ENCODE measurements at regions of chr3 and their contacts with region 1.

Region 1: GRCh38 chr3:179322286-179323196 is at the start of gene ZNF639:
- DNase-seq: peak; percentile 80 to 83
- ATAC-seq: peak; percentile 86 to 94
- H3K4me3 ChIP-seq: peak within 1 kb of the TSS; percentile 80
- H3K27ac ChIP-seq: peak within 1 kb of the TSS; percentile 95 to 100
- H3K4me1 ChIP-seq: peaks cover 8% of the 10 kb centered on the region
- CTCF ChIP-seq: peak; percentile 53
- EP300 ChIP-seq: no peak
- POLR2A ChIP-seq: peak; percentile 75
- RAD21 ChIP-seq: no peak
- polyA plus RNA-seq, gene ZNF639: 19.0 and 19.8 TPM in 2 replicates

Region 2: DNA sequence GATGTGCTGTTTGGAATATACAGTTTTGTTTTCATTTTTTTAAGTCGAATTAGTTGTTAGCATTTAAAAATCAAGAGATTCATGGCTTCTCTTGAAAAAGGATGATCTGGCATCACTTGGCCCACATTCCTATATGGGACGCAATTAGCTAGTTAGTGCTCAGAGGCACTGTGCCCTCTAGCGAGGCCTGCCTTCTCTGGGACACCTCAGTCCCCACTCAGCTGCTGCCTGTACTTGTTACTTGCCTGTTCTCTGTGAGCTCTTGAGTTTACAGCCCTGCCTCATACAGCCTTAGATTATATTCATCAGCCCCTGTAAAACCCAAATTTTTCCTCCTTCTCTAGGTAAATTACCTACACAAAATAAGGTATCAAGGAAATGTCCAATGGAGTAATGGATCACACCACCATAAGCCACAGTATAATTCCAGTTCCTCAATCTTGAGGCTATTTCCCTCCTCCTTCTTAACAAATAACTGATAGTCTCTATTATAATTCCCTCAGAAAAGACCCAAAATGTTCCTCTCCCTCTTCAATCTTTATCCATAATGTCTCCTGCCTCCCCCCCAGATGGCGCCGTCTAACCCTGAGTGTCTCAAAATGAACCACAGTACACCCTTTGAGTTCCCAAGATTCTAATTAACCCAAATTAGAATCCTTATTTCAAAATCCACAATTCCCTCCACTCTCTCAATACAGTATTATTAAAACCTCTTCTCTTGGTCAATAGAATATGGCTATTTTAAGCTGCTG is 253.6 kb before region 1 on chr3:
- CTCF ChIA-PET with region 1: interaction called, 11 read pairs
- POLR2A ChIA-PET with region 1: interaction called, 6 read pairs
- DNase-seq: peak; percentile 30 to 35
- ATAC-seq: peak in 1 of 2 experiments; percentile 48; a peak in 1 of 6 replicates
- H3K4me3 ChIP-seq: peak overlapping the region; percentile 88; the same call in 2 of the 3 replicates
- H3K27ac ChIP-seq: peak overlapping the region; percentile 52 to 85; a peak in 3 of 6 replicates
- H3K4me1 ChIP-seq: peaks cover 5% of the 10 kb centered on the region; the same call in 2 of the 3 replicates
- CTCF ChIP-seq: peak; percentile 60
- EP300 ChIP-seq: no peak
- POLR2A ChIP-seq: no peak
- RAD21 ChIP-seq: peak; percentile 54 to 58; a peak in 4 of 5 replicates

Region 3: GRCh38 chr3:179105881-179106280 is 216.7 kb before region 1 on chr3:
- CTCF ChIA-PET with region 1: interaction called, 12 read pairs
- POLR2A ChIA-PET with region 1: no interaction called
- DNase-seq: no peak
- ATAC-seq: no peak
- H3K4me3 ChIP-seq: no peak overlapping the region
- H3K27ac ChIP-seq: no peak overlapping the region
- H3K4me1 ChIP-seq: no peaks in the 10 kb centered on the region
- CTCF ChIP-seq: no peak
- EP300 ChIP-seq: no peak
- POLR2A ChIP-seq: no peak
- RAD21 ChIP-seq: no peak